ENCODE measurements at regions of chr12 and their contacts with region 1.

Region 1: DNA sequence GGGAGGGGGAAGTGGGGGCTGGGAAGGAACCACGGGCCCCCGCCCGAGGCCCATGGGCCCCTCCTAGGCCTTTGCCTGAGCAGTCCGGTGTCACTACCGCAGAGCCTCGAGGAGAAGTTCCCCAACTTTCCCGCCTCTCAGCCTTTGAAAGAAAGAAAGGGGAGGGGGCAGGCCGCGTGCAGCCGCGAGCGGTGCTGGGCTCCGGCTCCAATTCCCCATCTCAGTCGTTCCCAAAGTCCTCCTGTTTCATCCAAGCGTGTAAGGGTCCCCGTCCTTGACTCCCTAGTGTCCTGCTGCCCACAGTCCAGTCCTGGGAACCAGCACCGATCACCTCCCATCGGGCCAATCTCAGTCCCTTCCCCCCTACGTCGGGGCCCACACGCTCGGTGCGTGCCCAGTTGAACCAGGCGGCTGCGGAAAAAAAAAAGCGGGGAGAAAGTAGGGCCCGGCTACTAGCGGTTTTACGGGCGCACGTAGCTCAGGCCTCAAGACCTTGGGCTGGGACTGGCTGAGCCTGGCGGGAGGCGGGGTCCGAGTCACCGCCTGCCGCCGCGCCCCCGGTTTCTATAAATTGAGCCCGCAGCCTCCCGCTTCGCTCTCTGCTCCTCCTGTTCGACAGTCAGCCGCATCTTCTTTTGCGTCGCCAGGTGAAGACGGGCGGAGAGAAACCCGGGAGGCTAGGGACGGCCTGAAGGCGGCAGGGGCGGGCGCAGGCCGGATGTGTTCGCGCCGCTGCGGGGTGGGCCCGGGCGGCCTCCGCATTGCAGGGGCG is at the start of gene GAPDH:
- DNase-seq: peak; percentile 92 to 93
- ATAC-seq: peak; percentile 71 to 88 (median 84)
- H3K4me3 ChIP-seq: peak within 1 kb of the TSS; percentile 81 to 99 (median 98)
- H3K27ac ChIP-seq: peak within 1 kb of the TSS; percentile 91 to 100 (median 98)
- H3K4me1 ChIP-seq: peaks cover 17 to 62% (median 54%) of the 10 kb centered on the region in 9 donors
- H3K27me3 ChIP-seq: no peaks in the 10 kb centered on the region
- CTCF ChIP-seq: peak in 1 of 9 donors; percentile 9
- total RNA-seq, gene GAPDH: 4,081 to 7,888 (median 4,666) TPM

Region 2: GRCh38 chr12:6262623-6263022 is 271.5 kb before region 1 on chr12:
- intact Hi-C with region 1: no loop called
- DNase-seq: no peak
- ATAC-seq: no peak
- H3K4me3 ChIP-seq: no peak overlapping the region
- H3K27ac ChIP-seq: no peak overlapping the region
- H3K4me1 ChIP-seq: no peaks in the 10 kb centered on the region
- H3K27me3 ChIP-seq: no peaks in the 10 kb centered on the region
- CTCF ChIP-seq: no peak

Region 3: GRCh38 chr12:6318440-6318879 is 215.6 kb before region 1 on chr12:
- intact Hi-C with region 1: no loop called
- DNase-seq: no peak
- ATAC-seq: no peak
- H3K4me3 ChIP-seq: no peak overlapping the region
- H3K27ac ChIP-seq: no peak overlapping the region
- H3K4me1 ChIP-seq: peaks cover 7 to 27% (median 16%) of the 10 kb centered on the region in 9 donors
- H3K27me3 ChIP-seq: no peaks in the 10 kb centered on the region
- CTCF ChIP-seq: no peak

Region 4: GRCh38 chr12:6335451-6336078 is 198.5 kb before region 1 on chr12:
- intact Hi-C with region 1: loop called in 5 of 10 experiments (anchors 5 to 10 kb)
- DNase-seq: peak; percentile 68 to 77
- ATAC-seq: peak; percentile 39 to 63 (median 58)
- H3K4me3 ChIP-seq: peak overlapping the region in 9 of 10 donors; percentile 30 to 99 (median 95)
- H3K27ac ChIP-seq: peak overlapping the region; percentile 88 to 100 (median 97)
- H3K4me1 ChIP-seq: peaks cover 42 to 96% (median 78%) of the 10 kb centered on the region in 9 donors
- H3K27me3 ChIP-seq: no peaks in the 10 kb centered on the region
- CTCF ChIP-seq: peak; percentile 14 to 71 (median 50)

Region 5: DNA sequence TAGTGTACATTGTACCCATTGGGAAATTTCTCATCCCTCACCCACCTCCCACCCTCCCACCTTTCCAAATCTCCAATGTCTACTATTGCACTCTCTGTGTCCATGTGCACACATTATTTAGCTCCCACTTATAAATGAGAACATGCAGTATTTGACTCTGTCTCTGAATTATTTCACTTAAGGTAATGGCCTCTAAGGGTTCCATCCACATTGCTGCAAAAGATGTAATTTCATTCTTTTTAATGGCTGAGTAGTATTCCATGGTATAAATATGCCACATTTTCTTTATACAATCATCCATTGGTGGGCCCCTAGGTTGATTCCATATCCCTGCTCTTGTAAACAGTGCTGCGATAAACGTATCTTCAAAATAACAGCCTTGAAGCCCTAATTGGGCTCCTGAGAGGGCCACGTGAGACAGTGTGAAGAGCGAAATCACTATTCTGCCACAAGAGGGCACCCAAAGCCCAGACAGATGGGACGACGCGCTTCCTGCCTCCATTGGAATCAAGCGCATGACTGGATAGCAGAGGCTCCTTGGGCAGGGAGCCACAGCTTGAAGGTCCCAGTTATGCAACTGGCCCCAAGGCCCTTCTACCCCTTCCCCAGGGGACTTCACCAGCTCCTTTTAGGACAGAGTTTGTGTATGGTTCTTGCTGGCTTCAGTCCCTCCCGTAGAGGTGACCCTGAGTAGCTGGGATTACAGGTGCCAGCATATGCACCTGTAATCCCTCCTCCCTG is 110.7 kb before region 1 on chr12:
- intact Hi-C with region 1: loop called (anchors 1 to 10 kb)
- DNase-seq: peak; percentile 73 to 86
- ATAC-seq: peak; percentile 91 to 99 (median 98)
- H3K4me3 ChIP-seq: no peak overlapping the region
- H3K27ac ChIP-seq: peak overlapping the region in 2 of 10 donors; percentile 26 to 36
- H3K4me1 ChIP-seq: peaks cover 0 to 21% (median 6%) of the 10 kb centered on the region in 9 donors
- H3K27me3 ChIP-seq: no peaks in the 10 kb centered on the region
- CTCF ChIP-seq: peak; percentile 84 to 95 (median 92)

Region 6: DNA sequence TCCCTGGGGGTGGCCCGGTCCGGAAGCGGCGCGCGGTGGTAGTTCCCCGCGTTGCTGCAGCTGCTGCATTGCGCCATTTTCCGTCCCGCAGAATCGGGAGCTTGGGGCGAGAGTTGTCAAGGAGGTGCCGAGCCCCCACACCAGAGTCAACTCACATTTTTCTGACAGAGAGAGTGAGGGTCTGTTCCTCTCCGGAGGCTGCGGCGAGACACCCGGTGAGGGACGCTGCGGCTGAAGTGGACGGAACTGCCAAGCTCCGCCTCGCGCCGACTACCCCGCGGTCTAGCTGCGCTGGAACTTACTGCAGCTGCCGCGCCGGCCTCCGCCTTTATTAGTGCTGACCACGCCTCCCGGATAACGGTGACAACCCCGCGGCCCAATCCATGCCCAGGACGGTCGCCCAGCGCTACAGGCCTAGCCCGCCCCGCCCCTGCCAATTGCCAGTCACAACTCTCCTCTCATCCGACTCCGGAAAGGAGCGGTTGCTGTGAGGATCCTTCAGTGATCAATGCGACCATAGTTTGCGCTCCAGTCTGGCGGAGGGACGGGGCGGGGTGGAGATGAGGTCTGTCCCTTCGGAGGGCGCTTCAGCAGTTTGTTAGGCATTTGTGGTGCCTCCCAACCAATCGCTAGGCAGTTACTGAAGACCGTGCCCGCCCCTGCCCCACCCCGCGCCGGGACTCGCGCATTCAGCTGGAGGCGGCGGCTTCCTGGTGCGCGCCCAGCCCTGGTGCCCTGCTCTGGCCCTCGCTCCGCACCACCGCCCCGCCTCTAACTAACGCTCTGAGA is 63.5 kb before region 1 on chr12 and contains the start of gene VAMP1:
- intact Hi-C with region 1: loop called in 6 of 10 experiments (anchors 2 to 10 kb)
- DNase-seq: peak; percentile 97 to 98
- ATAC-seq: peak; percentile 97 to 99 (median 98)
- H3K4me3 ChIP-seq: peak within 1 kb of the TSS; percentile 60 to 78 (median 72)
- H3K27ac ChIP-seq: peak within 1 kb of the TSS; percentile 16 to 93 (median 86)
- H3K4me1 ChIP-seq: peaks cover 4 to 45% (median 21%) of the 10 kb centered on the region in 9 donors
- H3K27me3 ChIP-seq: no peaks in the 10 kb centered on the region
- CTCF ChIP-seq: peak in 2 of 9 donors; percentile 9 to 16
- total RNA-seq, gene VAMP1: 1.4 to 6.1 (median 3.0) TPM

Region 7: DNA sequence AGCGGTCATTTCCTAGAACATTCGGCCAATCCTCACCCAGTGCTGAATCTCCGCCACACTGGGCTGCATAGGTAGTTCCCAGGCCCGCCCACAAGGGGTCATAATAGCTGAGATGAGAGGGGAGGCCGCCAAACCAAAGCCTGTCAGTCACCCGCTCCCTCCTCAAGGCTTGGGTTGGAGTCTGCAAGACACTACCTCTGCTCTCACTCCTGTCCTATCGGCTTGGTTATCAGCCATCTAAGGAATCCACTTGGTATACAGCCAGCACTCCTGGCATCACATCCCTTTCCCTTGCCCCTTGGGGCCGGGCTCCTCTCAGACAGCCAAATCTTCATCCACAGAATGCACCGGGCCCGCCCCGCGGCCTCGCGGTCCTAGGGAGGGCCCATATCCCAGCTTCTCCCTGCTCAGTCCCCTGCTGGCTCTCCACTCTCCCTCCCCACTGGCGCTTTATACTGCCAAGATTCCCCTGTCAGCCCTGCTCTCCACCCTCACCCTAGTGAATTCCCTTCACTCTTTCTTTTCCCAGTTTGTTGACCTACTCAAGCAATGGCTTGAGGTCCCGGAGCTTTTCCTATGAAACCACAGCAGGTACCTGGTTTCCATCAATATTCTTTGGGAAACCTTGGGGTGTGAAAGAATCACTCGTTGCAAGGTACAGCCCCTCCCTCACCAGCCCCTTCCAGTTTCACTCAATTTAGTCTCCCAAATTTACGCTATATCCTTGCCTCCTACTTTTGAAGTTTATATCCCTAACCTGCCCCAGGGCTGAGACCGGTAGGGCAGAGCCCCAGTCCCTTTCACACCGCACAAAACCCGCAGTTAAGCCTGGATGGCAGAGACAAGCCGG is 20.3 kb after region 1 on chr12:
- intact Hi-C with region 1: loop called in 4 of 10 experiments (anchors 2 kb)
- DNase-seq: peak; percentile 77 to 83
- ATAC-seq: peak; percentile 30 to 57 (median 43)
- H3K4me3 ChIP-seq: peak overlapping the region; percentile 66 to 98 (median 94)
- H3K27ac ChIP-seq: peak overlapping the region; percentile 53 to 98 (median 92)
- H3K4me1 ChIP-seq: peaks cover 40 to 79% (median 70%) of the 10 kb centered on the region in 9 donors
- H3K27me3 ChIP-seq: no peaks in the 10 kb centered on the region
- CTCF ChIP-seq: peak; percentile 40 to 81 (median 69)

Measured in heart right ventricle (tissue), 16 donors.